Calu3 (cell line): ENCODE measurements at regions of chr18 and their contacts with region 1.

Region 1: GRCh38 chr18:59070181-59070912 is 69.3 kb upstream of the SEC11C start:
- DNase-seq: peak; percentile 95
- H3K4me3 Mint-ChIP-seq: no peak overlapping the region
- H3K27ac Mint-ChIP-seq: no peak overlapping the region
- H3K4me1 Mint-ChIP-seq: peaks cover 30% of the 10 kb centered on the region
- H3K27me3 Mint-ChIP-seq: no peaks in the 10 kb centered on the region
- CTCF ChIP-seq: peak; percentile 94

Region 2: GRCh38 chr18:58863539-58864145 is 206.7 kb before region 1 on chr18:
- CTCF ChIA-PET with region 1: interaction called, 3 read pairs
- intact Hi-C with region 1: loop called (anchors 10 kb)
- DNase-seq: peak; percentile 61
- H3K4me3 Mint-ChIP-seq: peak overlapping the region; percentile 73
- H3K27ac Mint-ChIP-seq: peak overlapping the region; percentile 98
- H3K4me1 Mint-ChIP-seq: peaks cover 76% of the 10 kb centered on the region
- H3K27me3 Mint-ChIP-seq: no peaks in the 10 kb centered on the region
- CTCF ChIP-seq: no peak

Region 3: GRCh38 chr18:58991167-58991798 is 79.1 kb before region 1 on chr18:
- CTCF ChIA-PET with region 1: no interaction called
- intact Hi-C with region 1: loop called (anchors 5 kb)
- DNase-seq: no peak
- H3K4me3 Mint-ChIP-seq: peak overlapping the region; percentile 27
- H3K27ac Mint-ChIP-seq: peak overlapping the region; percentile 87
- H3K4me1 Mint-ChIP-seq: peaks cover 48% of the 10 kb centered on the region
- H3K27me3 Mint-ChIP-seq: no peaks in the 10 kb centered on the region
- CTCF ChIP-seq: no peak

Region 4: GRCh38 chr18:59002974-59003594 is 67.3 kb before region 1 on chr18:
- CTCF ChIA-PET with region 1: no interaction called
- intact Hi-C with region 1: no loop called
- DNase-seq: no peak
- H3K4me3 Mint-ChIP-seq: no peak overlapping the region
- H3K27ac Mint-ChIP-seq: peak overlapping the region; percentile 60
- H3K4me1 Mint-ChIP-seq: peaks cover 45% of the 10 kb centered on the region
- H3K27me3 Mint-ChIP-seq: no peaks in the 10 kb centered on the region
- CTCF ChIP-seq: no peak